ENCODE measurements at regions of chr17 and their contacts with region 1.

Region 1: GRCh38 chr17:37844158-37844976 is 79.8 kb upstream of the TBC1D3K start:
- DNase-seq: peak; percentile 59
- ATAC-seq: peak; percentile 89
- H3K4me3 Mint-ChIP-seq: peak overlapping the region; percentile 79
- H3K27ac Mint-ChIP-seq: peak overlapping the region; percentile 83
- H3K4me1 Mint-ChIP-seq: peaks cover 51% of the 10 kb centered on the region
- H3K27me3 Mint-ChIP-seq: no peaks in the 10 kb centered on the region
- CTCF ChIP-seq: no peak

Region 2: GRCh38 chr17:37527249-37527851 is 317.0 kb before region 1 on chr17:
- CTCF ChIA-PET with region 1: no interaction called
- POLR2A ChIA-PET with region 1: no interaction called
- intact Hi-C with region 1: loop called (anchors 1 kb)
- DNase-seq: no peak
- ATAC-seq: peak; percentile 37
- H3K4me3 Mint-ChIP-seq: no peak overlapping the region
- H3K27ac Mint-ChIP-seq: no peak overlapping the region
- H3K4me1 Mint-ChIP-seq: no peaks in the 10 kb centered on the region
- H3K27me3 Mint-ChIP-seq: no peaks in the 10 kb centered on the region
- CTCF ChIP-seq: no peak

Region 3: GRCh38 chr17:37701496-37701898 is 142.9 kb before region 1 on chr17:
- CTCF ChIA-PET with region 1: no interaction called
- POLR2A ChIA-PET with region 1: no interaction called
- intact Hi-C with region 1: loop called (anchors 1 kb)
- DNase-seq: peak; percentile 44
- ATAC-seq: peak; percentile 84
- H3K4me3 Mint-ChIP-seq: peak overlapping the region; percentile 76
- H3K27ac Mint-ChIP-seq: peak overlapping the region; percentile 57
- H3K4me1 Mint-ChIP-seq: peaks cover 17% of the 10 kb centered on the region
- H3K27me3 Mint-ChIP-seq: peaks cover 6% of the 10 kb centered on the region
- CTCF ChIP-seq: peak; percentile 84

Region 4: GRCh38 chr17:37818689-37819088 is 25.7 kb before region 1 on chr17:
- CTCF ChIA-PET with region 1: interaction called, 13 read pairs
- POLR2A ChIA-PET with region 1: interaction called, 8 read pairs
- intact Hi-C with region 1: no loop called
- DNase-seq: no peak
- ATAC-seq: no peak
- H3K4me3 Mint-ChIP-seq: no peak overlapping the region
- H3K27ac Mint-ChIP-seq: no peak overlapping the region
- H3K4me1 Mint-ChIP-seq: peaks cover 36% of the 10 kb centered on the region
- H3K27me3 Mint-ChIP-seq: peaks cover 13% of the 10 kb centered on the region
- CTCF ChIP-seq: no peak

Measured in activated B cell treated with CpG ODN at 0.5 μM for 24 hours (primary cell).